ENCODE measurements at regions of chr2 and their contacts with region 1.

Region 1: DNA sequence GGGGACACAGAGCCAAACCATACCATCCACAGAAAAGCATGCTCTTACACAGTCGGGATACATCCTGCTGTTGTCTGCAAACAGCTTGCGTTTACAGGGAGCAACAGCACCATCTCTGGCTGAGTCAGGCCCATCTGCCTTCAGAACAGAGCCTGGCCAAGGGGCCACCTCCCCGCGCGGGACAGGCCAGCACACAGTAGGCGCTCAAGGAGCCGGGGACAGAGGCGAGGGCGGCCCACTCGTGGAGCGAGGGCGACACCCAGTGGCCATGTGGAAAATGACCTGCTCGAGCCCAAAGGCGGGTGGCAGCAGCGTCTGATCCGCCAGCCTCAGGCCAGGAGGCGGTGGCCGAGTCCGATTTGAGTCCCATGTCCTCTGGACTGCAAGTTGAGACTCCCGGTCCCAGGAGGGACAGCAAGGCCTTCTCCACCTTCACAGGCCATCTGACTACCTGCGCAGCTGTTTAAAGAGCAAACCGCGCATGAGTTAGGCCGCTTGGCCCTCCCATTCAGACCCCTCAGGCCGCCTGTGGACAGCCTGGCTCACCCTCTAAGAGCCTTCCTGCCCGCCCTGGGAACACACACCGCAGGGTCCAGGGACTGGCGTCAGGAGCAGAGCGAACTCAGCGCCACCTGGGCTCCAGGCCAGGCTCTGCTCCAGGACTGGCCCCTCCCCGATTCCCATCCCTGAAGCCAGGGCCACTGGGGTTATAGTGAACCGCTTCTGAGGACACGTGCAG is 38.3 kb downstream of the TTC32 start:
- DNase-seq: peak; percentile 81
- ATAC-seq: peak; percentile 84
- H3K4me3 Mint-ChIP-seq: no peak overlapping the region
- H3K27ac Mint-ChIP-seq: no peak overlapping the region
- H3K4me1 Mint-ChIP-seq: peaks cover 8% of the 10 kb centered on the region
- H3K27me3 Mint-ChIP-seq: peaks cover 2% of the 10 kb centered on the region

Region 2: DNA sequence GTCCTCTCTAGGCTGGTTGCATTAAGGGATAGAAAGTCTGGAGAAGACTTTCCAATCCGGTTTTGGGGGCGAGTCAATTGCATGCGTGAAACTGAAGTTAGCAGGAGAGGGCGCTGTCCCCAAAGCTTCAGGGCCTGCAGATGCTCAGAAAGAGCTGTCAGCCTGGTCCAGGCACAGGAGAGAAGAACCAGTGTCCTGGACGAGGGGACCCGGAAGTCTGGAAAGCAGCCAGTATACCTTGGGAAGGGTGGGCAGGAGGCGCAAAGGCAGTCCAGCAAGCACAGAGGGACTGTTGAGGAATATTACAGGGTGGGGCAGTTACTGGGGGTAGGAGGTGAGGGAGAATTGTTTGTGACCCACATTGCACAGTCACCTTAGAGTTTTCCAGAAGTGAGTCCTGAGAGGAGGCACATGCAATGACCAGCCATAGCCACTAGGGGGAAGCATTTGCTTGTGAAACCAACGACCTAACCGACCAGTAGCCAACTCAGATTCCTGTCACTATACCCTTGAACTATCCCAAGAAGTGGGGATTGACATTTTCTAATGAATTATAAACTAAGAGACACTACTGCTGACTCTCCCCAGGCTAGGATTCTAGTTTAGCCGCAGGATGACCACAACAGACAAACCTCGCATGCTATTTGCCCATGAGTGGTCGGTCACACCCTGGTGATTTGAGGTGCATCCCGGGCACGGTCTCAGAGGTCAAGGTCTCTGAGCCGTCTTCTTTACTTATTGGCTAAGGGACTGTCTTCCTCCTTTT is 1475.8 kb before region 1 on chr2:
- CTCF ChIA-PET with region 1: no interaction called
- POLR2A ChIA-PET with region 1: no interaction called
- intact Hi-C with region 1: loop called in 1 of 2 experiments (anchors 1 kb)
- DNase-seq: peak; percentile 74
- ATAC-seq: peak; percentile 47
- H3K4me3 Mint-ChIP-seq: no peak overlapping the region
- H3K27ac Mint-ChIP-seq: no peak overlapping the region
- H3K4me1 Mint-ChIP-seq: no peaks in the 10 kb centered on the region
- H3K27me3 Mint-ChIP-seq: no peaks in the 10 kb centered on the region

Region 3: GRCh38 chr2:18520451-18521425 is 1342.7 kb before region 1 on chr2:
- CTCF ChIA-PET with region 1: interaction called, 3 read pairs
- POLR2A ChIA-PET with region 1: no interaction called
- intact Hi-C with region 1: loop called (anchors 1 kb)
- DNase-seq: peak; percentile 85
- ATAC-seq: peak; percentile 75
- H3K4me3 Mint-ChIP-seq: no peak overlapping the region
- H3K27ac Mint-ChIP-seq: no peak overlapping the region
- H3K4me1 Mint-ChIP-seq: no peaks in the 10 kb centered on the region
- H3K27me3 Mint-ChIP-seq: peaks cover 11% of the 10 kb centered on the region

Region 4: DNA sequence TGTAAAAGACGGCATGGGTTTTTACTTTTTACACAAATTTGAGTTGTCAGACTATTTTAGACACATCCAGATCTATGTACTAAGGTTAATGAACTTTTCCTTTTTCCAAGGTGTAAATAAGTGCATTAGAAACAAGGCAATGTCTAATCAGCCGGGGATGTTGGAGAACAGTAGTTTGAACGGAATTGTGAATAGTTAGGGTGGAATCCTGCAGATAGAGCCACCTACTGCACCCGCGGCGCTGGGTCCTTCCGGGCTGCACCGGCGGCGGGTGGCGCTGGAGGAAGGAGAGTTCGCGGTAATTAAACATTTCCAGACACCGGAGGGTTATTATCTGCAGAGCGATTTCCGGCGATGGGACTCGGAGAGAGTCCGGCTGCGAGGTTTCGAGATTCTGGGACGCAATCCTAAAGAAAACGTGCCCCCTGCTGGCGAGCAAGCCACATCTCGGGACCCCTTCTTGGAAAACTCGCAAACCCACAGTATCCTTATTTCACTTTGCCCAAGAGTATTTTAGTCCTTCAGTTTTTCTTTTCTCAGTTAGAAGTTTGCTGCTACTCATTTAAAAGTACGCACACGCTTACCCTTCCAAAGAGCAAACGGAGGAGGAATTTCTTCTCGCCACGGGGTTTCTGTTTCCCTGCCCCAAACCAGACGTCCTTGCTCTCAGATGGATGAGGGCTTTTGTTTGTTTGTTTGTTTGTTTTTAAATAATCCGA is 500.6 kb before region 1 on chr2:
- CTCF ChIA-PET with region 1: no interaction called
- POLR2A ChIA-PET with region 1: no interaction called
- intact Hi-C with region 1: loop called (anchors 1 to 2 kb)
- DNase-seq: peak; percentile 74
- ATAC-seq: peak; percentile 59
- H3K4me3 Mint-ChIP-seq: peak overlapping the region; percentile 88
- H3K27ac Mint-ChIP-seq: peak overlapping the region; percentile 65
- H3K4me1 Mint-ChIP-seq: peaks cover 30% of the 10 kb centered on the region
- H3K27me3 Mint-ChIP-seq: peaks cover 57% of the 10 kb centered on the region

Region 5: DNA sequence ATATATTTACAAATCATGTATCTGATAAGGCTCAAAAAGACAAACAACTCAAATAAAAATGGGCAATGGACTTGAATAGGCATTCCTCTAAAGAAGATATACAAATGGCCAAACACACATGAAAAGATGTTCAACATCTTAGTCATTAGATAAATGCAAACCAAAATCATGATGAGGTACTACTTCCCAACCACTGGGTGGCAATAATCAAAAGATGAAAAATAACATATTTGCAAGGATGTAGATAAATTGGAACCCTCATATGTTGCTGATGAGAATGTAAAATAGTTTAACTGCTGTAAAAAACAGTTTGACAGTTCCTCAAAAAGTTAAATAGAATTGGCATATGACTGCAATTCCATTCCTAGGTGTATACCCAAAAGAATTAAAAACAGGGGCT is 94.0 kb before region 1 on chr2:
- CTCF ChIA-PET with region 1: no interaction called
- POLR2A ChIA-PET with region 1: no interaction called
- intact Hi-C with region 1: loop called in 1 of 2 experiments (anchors 5 kb)
- DNase-seq: no peak
- ATAC-seq: no peak
- H3K4me3 Mint-ChIP-seq: no peak overlapping the region
- H3K27ac Mint-ChIP-seq: no peak overlapping the region
- H3K4me1 Mint-ChIP-seq: no peaks in the 10 kb centered on the region
- H3K27me3 Mint-ChIP-seq: peaks cover 2% of the 10 kb centered on the region

Measured in activated CD4-positive, alpha-beta T cell treated with anti-CD3 and anti-CD28 coated beads for 36 hours (primary cell).